H1 (cell line): ENCODE measurements at regions of chr5 and their contacts with region 1.

Region 1: DNA sequence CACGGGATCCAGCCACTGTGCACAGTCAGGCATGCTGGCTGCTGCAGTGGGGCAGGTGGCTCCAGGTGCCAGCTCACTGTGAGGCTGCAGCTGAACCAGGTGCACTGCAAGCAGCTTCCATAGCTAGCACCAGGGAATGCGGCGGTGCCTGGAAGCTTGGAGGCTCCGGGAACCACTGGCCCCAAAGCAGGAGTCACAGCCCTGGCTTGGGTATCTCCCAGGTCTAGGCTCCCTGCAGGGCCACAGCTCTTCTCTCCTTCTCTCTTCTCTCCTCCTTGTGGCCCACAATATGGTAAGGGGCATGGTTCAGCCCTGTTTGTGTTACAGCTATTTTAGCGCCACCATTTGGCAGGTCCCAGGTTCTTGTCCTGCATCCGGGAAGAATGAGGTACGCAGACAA is 6.7 kb upstream of the MTMR12 start:
- DNase-seq: peak in 1 of 2 experiments; percentile 67
- H3K4me3 ChIP-seq: no peak overlapping the region
- H3K27ac ChIP-seq: no peak overlapping the region
- H3K4me1 ChIP-seq: peaks cover 0 to 4% (median 0%) of the 10 kb centered on the region in 4 experiments; a peak in 1 of 7 replicates
- H3K27me3 ChIP-seq: no peaks in the 10 kb centered on the region
- CTCF ChIP-seq: peak; percentile 32 to 66 (median 52)
- EP300 ChIP-seq: no peak
- POLR2A ChIP-seq: no peak
- RAD21 ChIP-seq: peak; percentile 59 to 73

Region 2: DNA sequence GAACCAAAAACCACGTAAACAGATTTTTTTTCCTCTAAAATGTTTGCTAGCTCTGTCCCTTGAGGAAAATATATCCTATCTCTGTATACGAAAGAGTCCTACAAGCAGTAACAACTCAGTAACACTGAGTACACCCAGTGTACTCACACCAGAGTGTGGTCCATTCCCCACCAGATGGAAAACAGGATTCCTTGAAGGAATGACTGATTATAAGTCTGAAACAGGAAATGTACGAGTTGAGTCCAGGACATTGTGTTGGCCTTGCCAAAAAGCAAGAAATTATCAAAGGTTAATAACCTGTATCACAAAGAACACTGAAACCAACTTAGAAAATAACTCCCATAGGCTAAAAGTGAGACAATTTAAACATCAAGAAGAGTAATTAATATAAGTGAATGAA is 165.7 kb before region 1 on chr5:
- CTCF ChIA-PET with region 1: no interaction called
- POLR2A ChIA-PET with region 1: no interaction called
- DNase-seq: no peak
- H3K4me3 ChIP-seq: no peak overlapping the region
- H3K27ac ChIP-seq: no peak overlapping the region
- H3K4me1 ChIP-seq: peaks cover 0 to 13% (median 2%) of the 10 kb centered on the region in 4 experiments; a peak in 2 of 7 replicates
- H3K27me3 ChIP-seq: no peaks in the 10 kb centered on the region
- CTCF ChIP-seq: no peak
- EP300 ChIP-seq: no peak
- POLR2A ChIP-seq: no peak
- RAD21 ChIP-seq: no peak

Region 3: DNA sequence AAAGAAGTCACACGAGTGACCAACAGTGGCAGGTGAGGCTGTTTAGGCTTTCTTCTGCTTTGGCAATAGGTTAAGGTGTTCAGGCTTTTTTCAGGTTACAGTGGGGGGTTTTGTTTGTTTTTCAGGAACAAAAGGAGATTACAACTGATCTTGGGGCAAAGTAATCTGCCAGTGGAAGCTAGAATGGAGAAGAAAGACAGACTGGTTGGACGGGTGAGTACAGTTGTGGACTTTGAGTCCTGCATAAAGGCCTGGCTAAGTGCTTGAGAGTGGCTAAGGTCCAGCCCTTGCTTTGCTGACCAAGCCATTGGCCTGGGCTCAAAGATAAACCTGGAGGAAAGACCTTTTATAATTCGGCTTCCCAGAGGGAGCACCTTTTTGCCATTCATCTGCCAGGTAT is 69.7 kb before region 1 on chr5:
- CTCF ChIA-PET with region 1: interaction called, 15 read pairs
- POLR2A ChIA-PET with region 1: no interaction called
- DNase-seq: no peak
- H3K4me3 ChIP-seq: no peak overlapping the region
- H3K27ac ChIP-seq: no peak overlapping the region
- H3K4me1 ChIP-seq: no peaks in the 10 kb centered on the region
- H3K27me3 ChIP-seq: no peaks in the 10 kb centered on the region
- CTCF ChIP-seq: no peak
- EP300 ChIP-seq: no peak
- POLR2A ChIP-seq: no peak
- RAD21 ChIP-seq: no peak

Region 4: GRCh38 chr5:32276173-32276853 is 43.1 kb before region 1 on chr5:
- CTCF ChIA-PET with region 1: interaction called, 11 read pairs
- POLR2A ChIA-PET with region 1: interaction called, 3 read pairs
- DNase-seq: peak in 1 of 2 experiments; percentile 43
- H3K4me3 ChIP-seq: no peak overlapping the region
- H3K27ac ChIP-seq: peak overlapping the region; percentile 78; the same call in 1 of the 2 replicates
- H3K4me1 ChIP-seq: peaks cover 9 to 29% (median 16%) of the 10 kb centered on the region in 4 experiments
- H3K27me3 ChIP-seq: no peaks in the 10 kb centered on the region
- CTCF ChIP-seq: no peak
- EP300 ChIP-seq: no peak
- POLR2A ChIP-seq: peak in 1 of 2 experiments; percentile 27; a peak in 1 of 3 replicates
- RAD21 ChIP-seq: no peak; a peak in 1 of 4 replicates